ENCODE measurements at regions of chr12 and their contacts with region 1.

Region 1: DNA sequence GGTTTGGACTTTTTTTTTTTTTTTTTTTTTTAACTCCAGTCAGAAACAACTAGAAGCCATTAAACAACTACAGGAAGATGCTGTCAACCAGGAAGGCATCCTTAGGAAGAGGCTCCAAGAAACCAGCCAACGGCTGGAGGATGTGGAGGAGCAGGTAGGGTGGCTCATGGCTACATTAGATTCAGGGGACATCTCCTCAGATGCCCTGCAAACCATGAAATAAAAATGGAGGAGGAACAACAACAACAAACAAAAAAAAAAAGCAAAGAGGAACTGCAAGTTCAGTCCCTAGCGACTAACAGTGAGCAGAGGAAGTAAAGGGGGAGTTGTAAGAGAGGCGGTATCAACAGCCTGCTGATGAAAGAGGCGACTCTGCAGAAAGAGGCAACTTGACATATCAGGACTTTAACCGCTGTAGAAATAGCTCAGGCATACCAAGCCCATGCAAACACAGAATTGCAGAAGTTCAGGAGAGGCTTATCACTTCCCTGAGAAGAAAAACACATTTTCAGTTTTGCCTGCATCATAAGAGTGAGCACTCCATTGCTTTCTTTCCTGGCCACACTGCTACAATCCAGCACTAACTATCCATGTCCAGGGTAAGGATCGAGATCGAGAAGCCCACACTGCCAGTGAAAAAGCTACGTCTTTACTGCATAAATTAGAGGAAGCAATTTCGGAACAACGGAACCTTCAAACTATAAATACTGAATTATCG is 103.5 kb upstream of the BCAT1 start:
- DNase-seq: peak; percentile 54
- H3K4me3 Mint-ChIP-seq: peak overlapping the region; percentile 91
- H3K27ac Mint-ChIP-seq: peak overlapping the region; percentile 97
- H3K4me1 Mint-ChIP-seq: peaks cover 41% of the 10 kb centered on the region
- H3K27me3 Mint-ChIP-seq: no peaks in the 10 kb centered on the region

Region 2: GRCh38 chr12:24479131-24479530 is 573.2 kb before region 1 on chr12:
- CTCF ChIA-PET with region 1: no interaction called
- POLR2A ChIA-PET with region 1: no interaction called
- intact Hi-C with region 1: no loop called
- DNase-seq: no peak
- H3K4me3 Mint-ChIP-seq: no peak overlapping the region
- H3K27ac Mint-ChIP-seq: no peak overlapping the region
- H3K4me1 Mint-ChIP-seq: no peaks in the 10 kb centered on the region
- H3K27me3 Mint-ChIP-seq: no peaks in the 10 kb centered on the region

Region 3: GRCh38 chr12:24705741-24706358 is 346.5 kb before region 1 on chr12:
- CTCF ChIA-PET with region 1: no interaction called
- POLR2A ChIA-PET with region 1: no interaction called
- intact Hi-C with region 1: loop called (anchors 5 kb)
- DNase-seq: peak; percentile 38
- H3K4me3 Mint-ChIP-seq: peak overlapping the region; percentile 6
- H3K27ac Mint-ChIP-seq: peak overlapping the region; percentile 73
- H3K4me1 Mint-ChIP-seq: peaks cover 21% of the 10 kb centered on the region
- H3K27me3 Mint-ChIP-seq: peaks cover 3% of the 10 kb centered on the region

Region 4: DNA sequence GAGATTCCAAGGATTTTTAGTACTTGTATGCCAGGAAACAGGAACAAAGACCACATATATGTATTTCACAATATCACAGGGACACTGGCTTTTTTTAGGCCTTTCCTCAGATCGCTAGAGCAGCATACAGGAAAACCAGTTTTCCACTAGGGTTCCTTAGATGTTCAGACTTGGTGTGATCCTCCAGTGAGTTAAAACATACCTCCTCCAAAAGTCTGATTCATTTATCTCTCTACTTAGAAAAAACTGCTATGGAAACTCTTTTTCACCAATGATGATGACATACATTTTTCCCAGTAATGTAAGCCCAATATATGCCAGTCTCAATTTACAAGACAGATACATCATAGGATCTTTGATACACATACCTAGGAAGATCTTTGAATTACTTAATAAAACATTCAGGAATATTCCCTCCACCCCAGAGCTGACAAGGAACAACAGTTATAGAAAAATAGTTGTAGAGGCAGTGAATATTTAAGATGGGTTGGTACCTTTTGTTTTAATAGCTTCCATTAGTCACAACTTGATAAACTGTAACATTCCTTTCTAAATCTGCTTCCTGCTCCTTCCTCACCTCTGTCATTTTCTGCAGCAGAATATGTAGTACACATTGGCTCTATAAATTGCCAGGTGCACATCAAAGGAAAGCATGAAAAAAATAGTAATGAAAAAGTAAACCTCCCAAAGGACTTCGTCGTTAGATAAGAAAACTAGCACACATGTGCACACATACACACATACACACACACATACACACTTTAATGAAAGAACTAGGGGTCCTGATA is 130.9 kb before region 1 on chr12:
- CTCF ChIA-PET with region 1: no interaction called
- POLR2A ChIA-PET with region 1: no interaction called
- intact Hi-C with region 1: loop called (anchors 1 kb)
- DNase-seq: no peak
- H3K4me3 Mint-ChIP-seq: no peak overlapping the region
- H3K27ac Mint-ChIP-seq: no peak overlapping the region
- H3K4me1 Mint-ChIP-seq: peaks cover 33% of the 10 kb centered on the region
- H3K27me3 Mint-ChIP-seq: peaks cover 7% of the 10 kb centered on the region

Region 5: GRCh38 chr12:24997970-24998582 is 54.3 kb before region 1 on chr12:
- CTCF ChIA-PET with region 1: interaction called, 16 read pairs
- POLR2A ChIA-PET with region 1: interaction called, 9 read pairs
- intact Hi-C with region 1: loop called (anchors 1 kb)
- DNase-seq: no peak
- H3K4me3 Mint-ChIP-seq: no peak overlapping the region
- H3K27ac Mint-ChIP-seq: peak overlapping the region; percentile 21
- H3K4me1 Mint-ChIP-seq: peaks cover 27% of the 10 kb centered on the region
- H3K27me3 Mint-ChIP-seq: no peaks in the 10 kb centered on the region

Region 6: GRCh38 chr12:25130741-25131188 is 78.4 kb after region 1 on chr12:
- CTCF ChIA-PET with region 1: interaction called, 5 read pairs
- POLR2A ChIA-PET with region 1: no interaction called
- intact Hi-C with region 1: loop called (anchors 5 kb)
- DNase-seq: no peak
- H3K4me3 Mint-ChIP-seq: no peak overlapping the region
- H3K27ac Mint-ChIP-seq: no peak overlapping the region
- H3K4me1 Mint-ChIP-seq: no peaks in the 10 kb centered on the region
- H3K27me3 Mint-ChIP-seq: no peaks in the 10 kb centered on the region

Region 7: DNA sequence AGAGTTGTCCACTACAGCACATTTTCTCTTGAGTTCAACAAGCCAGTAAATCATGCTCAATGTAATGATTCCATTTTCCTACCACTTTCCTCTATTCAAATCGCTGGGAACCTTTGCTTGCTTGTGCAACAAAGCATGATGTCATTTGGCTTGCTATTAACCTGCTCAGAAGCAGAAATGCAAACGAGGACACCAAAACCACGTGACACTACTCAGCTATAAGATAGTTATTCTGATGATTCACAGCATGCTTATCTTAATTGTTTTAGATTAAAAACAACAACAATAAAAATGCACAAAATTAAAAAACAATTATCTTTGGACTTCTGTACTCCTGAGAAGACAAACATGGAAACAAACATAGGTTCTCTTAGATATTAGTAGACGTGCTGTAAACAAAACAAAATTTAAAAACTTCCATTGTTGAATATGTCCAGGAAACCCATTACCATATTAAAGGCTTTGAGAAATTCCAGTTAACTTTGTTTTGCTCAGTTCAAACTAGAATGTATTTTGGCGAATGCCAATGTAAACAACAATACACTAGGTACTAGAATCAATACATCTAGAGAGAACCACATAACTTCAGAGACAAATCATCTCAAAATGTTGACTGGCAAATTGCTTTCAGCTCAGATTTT is 275.8 kb after region 1 on chr12:
- CTCF ChIA-PET with region 1: interaction called, 3 read pairs
- POLR2A ChIA-PET with region 1: no interaction called
- intact Hi-C with region 1: loop called (anchors 1 kb)
- DNase-seq: no peak
- H3K4me3 Mint-ChIP-seq: no peak overlapping the region
- H3K27ac Mint-ChIP-seq: no peak overlapping the region
- H3K4me1 Mint-ChIP-seq: peaks cover 23% of the 10 kb centered on the region
- H3K27me3 Mint-ChIP-seq: peaks cover 6% of the 10 kb centered on the region